Activated CD4-positive, alpha-beta T cell treated with anti-CD3 and anti-CD28 coated beads for 36 hours (primary cell): ENCODE measurements at regions of chr11 and their contacts with region 1.

Region 1: DNA sequence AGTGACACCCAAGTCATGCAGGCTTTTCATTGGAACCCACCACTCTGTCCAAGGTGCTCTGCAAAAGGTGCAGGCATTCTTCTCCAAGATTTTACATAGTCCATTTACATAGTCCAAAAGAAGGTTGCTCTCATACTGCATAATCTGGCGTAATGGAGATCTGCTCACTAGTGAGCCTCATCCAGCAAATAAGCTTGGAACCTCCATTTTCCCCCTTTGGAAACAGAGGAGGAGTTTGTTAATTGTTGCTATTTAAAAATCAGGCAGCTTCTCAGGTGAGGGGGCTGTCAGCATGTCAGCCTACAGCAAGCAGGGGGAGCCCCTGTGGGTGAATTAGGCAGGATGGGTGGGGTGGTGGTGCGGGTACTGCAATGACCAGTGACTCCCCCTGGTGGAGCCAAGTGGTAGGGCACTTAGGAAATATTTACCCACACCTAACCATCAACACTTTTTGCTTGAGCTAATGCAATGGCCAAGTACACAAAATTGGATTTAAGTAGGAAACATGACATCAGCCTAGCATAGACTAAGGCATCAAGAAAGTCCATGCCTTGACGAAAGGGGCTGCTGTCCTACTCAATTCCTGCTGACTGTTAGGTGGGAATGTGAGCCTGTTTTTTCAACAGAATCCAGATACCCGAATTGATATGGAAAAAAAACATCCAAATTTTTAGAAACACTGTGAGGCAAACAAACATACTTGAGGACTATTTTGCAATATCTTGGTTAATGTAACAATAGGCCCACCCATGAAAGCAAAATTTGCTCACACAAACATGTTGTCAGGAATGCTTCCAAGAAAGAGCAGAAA is 64.5 kb downstream of the AMBRA1 start:
- DNase-seq: peak; percentile 89
- ATAC-seq: peak; percentile 92
- H3K4me3 Mint-ChIP-seq: peak overlapping the region; percentile 5
- H3K27ac Mint-ChIP-seq: peak overlapping the region; percentile 32
- H3K4me1 Mint-ChIP-seq: peaks cover 29% of the 10 kb centered on the region
- H3K27me3 Mint-ChIP-seq: no peaks in the 10 kb centered on the region

Region 2: GRCh38 chr11:46392421-46393230 is 136.7 kb before region 1 on chr11:
- CTCF ChIA-PET with region 1: interaction called, 10 read pairs
- POLR2A ChIA-PET with region 1: no interaction called
- intact Hi-C with region 1: loop called in 1 of 2 experiments (anchors 1 kb)
- DNase-seq: peak; percentile 89
- ATAC-seq: peak; percentile 76
- H3K4me3 Mint-ChIP-seq: peak overlapping the region; percentile 61
- H3K27ac Mint-ChIP-seq: no peak overlapping the region
- H3K4me1 Mint-ChIP-seq: peaks cover 22% of the 10 kb centered on the region
- H3K27me3 Mint-ChIP-seq: peaks cover 37% of the 10 kb centered on the region

Region 3: DNA sequence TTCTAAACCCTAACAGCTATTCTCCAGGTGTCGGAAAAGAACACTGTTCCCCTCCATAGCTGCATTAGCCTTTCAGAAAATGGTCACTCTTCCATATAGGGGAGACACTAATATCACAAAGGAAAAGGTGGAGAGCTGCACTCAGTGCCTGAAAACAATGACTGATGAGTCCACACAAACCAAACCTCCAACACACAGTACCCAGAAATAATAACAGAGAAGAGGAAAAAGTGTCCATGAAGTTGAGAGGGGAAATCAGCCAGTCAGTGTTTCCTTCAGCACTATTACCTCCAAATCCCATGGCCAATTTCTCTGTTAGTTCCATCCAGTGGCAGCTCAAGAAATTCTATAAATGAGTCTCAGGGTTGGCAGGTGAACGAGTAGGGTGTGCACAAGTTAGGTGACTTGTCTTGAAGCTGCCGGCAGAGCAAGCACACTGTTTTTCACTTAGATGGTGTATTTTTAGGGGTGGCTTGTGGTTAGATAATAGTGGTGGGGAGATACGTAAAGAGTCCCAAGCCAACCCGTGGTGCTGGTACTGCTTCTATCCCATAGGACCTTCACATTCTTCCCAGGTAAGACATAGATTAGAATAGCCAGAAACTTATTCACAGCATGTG is 53.3 kb before region 1 on chr11:
- CTCF ChIA-PET with region 1: interaction called, 10 read pairs
- POLR2A ChIA-PET with region 1: no interaction called
- intact Hi-C with region 1: no loop called
- DNase-seq: no peak
- ATAC-seq: peak; percentile 59
- H3K4me3 Mint-ChIP-seq: no peak overlapping the region
- H3K27ac Mint-ChIP-seq: peak overlapping the region; percentile 67
- H3K4me1 Mint-ChIP-seq: peaks cover 35% of the 10 kb centered on the region
- H3K27me3 Mint-ChIP-seq: no peaks in the 10 kb centered on the region

Region 4: GRCh38 chr11:46489661-46490560 is 39.4 kb before region 1 on chr11:
- CTCF ChIA-PET with region 1: interaction called, 30 read pairs
- POLR2A ChIA-PET with region 1: no interaction called
- intact Hi-C with region 1: loop called in 1 of 2 experiments (anchors 1 kb)
- DNase-seq: peak; percentile 51
- ATAC-seq: peak; percentile 60
- H3K4me3 Mint-ChIP-seq: no peak overlapping the region
- H3K27ac Mint-ChIP-seq: no peak overlapping the region
- H3K4me1 Mint-ChIP-seq: peaks cover 4% of the 10 kb centered on the region
- H3K27me3 Mint-ChIP-seq: no peaks in the 10 kb centered on the region

Region 5: GRCh38 chr11:46504817-46505613 is 24.3 kb before region 1 on chr11:
- CTCF ChIA-PET with region 1: interaction called, 10 read pairs
- POLR2A ChIA-PET with region 1: no interaction called
- intact Hi-C with region 1: loop called in 1 of 2 experiments (anchors 2 kb)
- DNase-seq: no peak
- ATAC-seq: peak; percentile 87
- H3K4me3 Mint-ChIP-seq: no peak overlapping the region
- H3K27ac Mint-ChIP-seq: peak overlapping the region; percentile 72
- H3K4me1 Mint-ChIP-seq: peaks cover 23% of the 10 kb centered on the region
- H3K27me3 Mint-ChIP-seq: no peaks in the 10 kb centered on the region

Region 6: GRCh38 chr11:46513934-46514342 is 15.4 kb before region 1 on chr11:
- CTCF ChIA-PET with region 1: interaction called, 10 read pairs
- POLR2A ChIA-PET with region 1: no interaction called
- intact Hi-C with region 1: no loop called
- DNase-seq: no peak
- ATAC-seq: no peak
- H3K4me3 Mint-ChIP-seq: no peak overlapping the region
- H3K27ac Mint-ChIP-seq: peak overlapping the region; percentile 64
- H3K4me1 Mint-ChIP-seq: peaks cover 2% of the 10 kb centered on the region
- H3K27me3 Mint-ChIP-seq: no peaks in the 10 kb centered on the region